ENCODE measurements at regions of chr11 and their contacts with region 1.

Region 1: DNA sequence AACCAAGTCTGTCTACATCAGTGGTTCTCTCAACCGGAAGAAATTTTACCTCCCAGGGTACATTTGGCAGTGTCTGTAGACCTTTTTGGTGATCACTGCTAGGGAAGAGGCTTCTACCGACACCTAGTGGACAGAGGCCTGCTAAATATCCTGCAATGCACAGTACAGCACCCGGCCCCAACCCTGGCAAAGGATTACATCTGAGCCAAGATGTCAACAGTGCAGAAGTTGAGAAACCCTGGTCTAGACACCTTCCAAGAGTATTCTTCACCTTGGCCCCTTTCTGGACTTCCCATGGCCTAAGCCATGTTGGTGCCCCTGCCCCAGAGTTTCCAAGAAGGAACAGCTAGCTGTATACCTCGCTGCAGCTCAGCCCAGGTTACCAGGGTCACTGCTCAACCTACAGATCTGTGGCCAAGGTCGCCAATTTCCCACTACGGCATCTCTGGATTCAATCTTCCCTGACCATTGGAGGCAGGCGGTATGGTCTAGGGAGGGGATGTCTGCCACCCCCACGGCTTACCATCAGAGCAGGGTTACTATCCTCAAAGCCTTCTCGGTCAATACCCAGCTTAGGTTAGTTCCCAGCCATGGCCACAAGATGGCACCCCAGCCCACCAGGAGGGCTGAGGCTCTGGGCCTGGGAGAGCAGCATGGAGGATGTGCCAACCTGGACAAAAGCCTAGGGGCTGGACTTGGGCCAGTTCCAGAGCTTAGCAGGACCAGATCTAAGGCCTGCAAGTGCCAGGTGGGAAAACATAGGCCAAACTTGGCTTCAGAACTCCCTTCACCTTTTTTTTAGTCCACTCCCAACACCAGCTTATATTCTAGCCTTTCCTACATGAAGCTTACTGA is 3.7 kb upstream of the KCNC1 start:
- DNase-seq: peak; percentile 70
- H3K4me3 Mint-ChIP-seq: no peak overlapping the region
- H3K27ac Mint-ChIP-seq: no peak overlapping the region
- H3K4me1 Mint-ChIP-seq: no peaks in the 10 kb centered on the region
- H3K27me3 Mint-ChIP-seq: peaks cover 57% of the 10 kb centered on the region

Region 2: GRCh38 chr11:17686231-17686980 is 44.4 kb before region 1 on chr11:
- CTCF ChIA-PET with region 1: no interaction called
- POLR2A ChIA-PET with region 1: no interaction called
- DNase-seq: no peak
- H3K4me3 Mint-ChIP-seq: no peak overlapping the region
- H3K27ac Mint-ChIP-seq: no peak overlapping the region
- H3K4me1 Mint-ChIP-seq: no peaks in the 10 kb centered on the region
- H3K27me3 Mint-ChIP-seq: peaks cover 6% of the 10 kb centered on the region

Region 3: DNA sequence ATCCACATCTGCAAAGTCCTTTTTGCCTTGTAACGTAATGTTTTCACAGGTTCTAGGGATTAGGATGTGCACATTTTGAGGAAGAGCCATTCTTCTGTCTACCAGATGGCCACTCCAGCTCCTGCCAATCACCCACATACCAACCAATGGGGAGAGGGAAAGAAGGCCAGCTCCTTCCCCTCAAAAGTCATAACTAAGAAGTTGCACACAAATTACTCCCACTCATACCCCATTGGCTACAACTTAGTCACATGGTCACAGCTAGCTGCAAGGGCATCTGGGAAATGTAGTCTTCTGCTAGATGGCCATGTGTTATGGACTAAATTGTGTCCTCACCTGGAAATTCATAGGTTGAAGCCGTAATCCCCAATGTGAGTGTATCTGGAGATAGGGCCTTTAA is 26.9 kb before region 1 on chr11:
- CTCF ChIA-PET with region 1: no interaction called
- POLR2A ChIA-PET with region 1: no interaction called
- DNase-seq: no peak
- H3K4me3 Mint-ChIP-seq: no peak overlapping the region
- H3K27ac Mint-ChIP-seq: no peak overlapping the region
- H3K4me1 Mint-ChIP-seq: no peaks in the 10 kb centered on the region
- H3K27me3 Mint-ChIP-seq: peaks cover 7% of the 10 kb centered on the region

Region 4: DNA sequence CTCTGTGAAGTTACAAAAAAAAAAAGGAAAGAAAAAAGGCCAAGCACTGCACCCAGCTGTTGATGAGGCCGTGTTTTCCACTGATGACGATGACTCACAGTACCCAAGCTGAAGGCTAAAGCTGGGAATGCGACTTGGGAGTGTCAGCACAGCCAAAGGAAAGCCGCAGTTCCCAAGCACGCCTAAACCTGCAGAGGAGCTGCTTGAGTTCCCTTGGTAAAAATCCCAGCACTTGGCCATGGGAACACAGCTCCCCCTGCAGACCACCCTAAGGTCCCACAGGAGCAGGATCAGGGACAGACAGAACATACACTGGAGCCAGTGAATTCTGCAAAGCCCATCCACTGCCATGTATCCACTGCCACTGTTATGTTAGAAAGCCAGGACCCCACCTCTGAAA is 242.2 kb after region 1 on chr11:
- CTCF ChIA-PET with region 1: interaction called, 130 read pairs
- POLR2A ChIA-PET with region 1: no interaction called
- DNase-seq: no peak
- H3K4me3 Mint-ChIP-seq: no peak overlapping the region
- H3K27ac Mint-ChIP-seq: no peak overlapping the region
- H3K4me1 Mint-ChIP-seq: no peaks in the 10 kb centered on the region
- H3K27me3 Mint-ChIP-seq: no peaks in the 10 kb centered on the region

Region 5: GRCh38 chr11:17978553-17979287 is 247.9 kb after region 1 on chr11:
- CTCF ChIA-PET with region 1: interaction called, 130 read pairs
- POLR2A ChIA-PET with region 1: no interaction called
- DNase-seq: peak; percentile 33
- H3K4me3 Mint-ChIP-seq: no peak overlapping the region
- H3K27ac Mint-ChIP-seq: no peak overlapping the region
- H3K4me1 Mint-ChIP-seq: no peaks in the 10 kb centered on the region
- H3K27me3 Mint-ChIP-seq: no peaks in the 10 kb centered on the region

Region 6: DNA sequence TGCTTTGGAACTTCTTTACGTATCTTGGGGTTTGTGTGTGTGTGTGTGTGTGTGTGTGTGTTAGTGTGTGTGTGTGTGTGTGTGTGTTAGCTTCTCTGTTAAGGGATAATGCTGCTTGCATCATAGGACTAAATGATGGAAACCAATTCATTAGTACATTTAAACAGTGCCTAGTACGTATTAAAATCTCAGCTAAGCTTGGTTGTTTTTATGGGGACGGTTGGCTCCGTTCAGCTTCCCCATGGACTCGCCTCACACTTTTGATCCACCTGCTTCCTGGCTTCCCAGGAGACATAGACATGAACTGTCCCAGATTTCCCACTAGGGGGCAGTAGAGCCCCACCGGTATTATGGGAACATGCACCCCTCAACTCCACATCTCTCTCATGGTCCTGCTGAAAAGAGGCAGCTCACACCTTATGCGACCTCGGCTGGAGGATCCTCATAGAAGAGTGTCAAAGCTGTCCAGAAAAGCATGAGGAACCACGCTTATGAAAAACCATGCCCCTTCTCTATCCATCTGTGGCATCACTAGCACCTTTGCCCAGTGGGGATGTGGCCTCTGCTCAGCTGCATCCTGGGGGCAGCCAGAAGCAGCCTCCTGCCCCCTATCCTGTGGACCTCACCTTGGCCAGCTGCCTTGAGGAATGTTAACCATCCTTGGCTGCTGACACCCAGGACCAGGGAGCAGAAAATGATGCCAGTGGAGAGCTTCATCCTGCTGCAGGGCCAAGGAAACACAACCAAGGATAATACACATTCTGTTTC is 384.7 kb after region 1 on chr11:
- CTCF ChIA-PET with region 1: no interaction called
- POLR2A ChIA-PET with region 1: no interaction called
- DNase-seq: peak; percentile 69
- H3K4me3 Mint-ChIP-seq: no peak overlapping the region
- H3K27ac Mint-ChIP-seq: no peak overlapping the region
- H3K4me1 Mint-ChIP-seq: no peaks in the 10 kb centered on the region
- H3K27me3 Mint-ChIP-seq: peaks cover 29% of the 10 kb centered on the region